Dendritic cell treated with granulocyte-macrophage colony-stimulating factor and Interleukin-4, amounts not matched to agents 40 ng/mL and 50 ng/mL, for 4 days (primary cell): ENCODE measurements at regions of chr13 and their contacts with region 1.

Region 1: DNA sequence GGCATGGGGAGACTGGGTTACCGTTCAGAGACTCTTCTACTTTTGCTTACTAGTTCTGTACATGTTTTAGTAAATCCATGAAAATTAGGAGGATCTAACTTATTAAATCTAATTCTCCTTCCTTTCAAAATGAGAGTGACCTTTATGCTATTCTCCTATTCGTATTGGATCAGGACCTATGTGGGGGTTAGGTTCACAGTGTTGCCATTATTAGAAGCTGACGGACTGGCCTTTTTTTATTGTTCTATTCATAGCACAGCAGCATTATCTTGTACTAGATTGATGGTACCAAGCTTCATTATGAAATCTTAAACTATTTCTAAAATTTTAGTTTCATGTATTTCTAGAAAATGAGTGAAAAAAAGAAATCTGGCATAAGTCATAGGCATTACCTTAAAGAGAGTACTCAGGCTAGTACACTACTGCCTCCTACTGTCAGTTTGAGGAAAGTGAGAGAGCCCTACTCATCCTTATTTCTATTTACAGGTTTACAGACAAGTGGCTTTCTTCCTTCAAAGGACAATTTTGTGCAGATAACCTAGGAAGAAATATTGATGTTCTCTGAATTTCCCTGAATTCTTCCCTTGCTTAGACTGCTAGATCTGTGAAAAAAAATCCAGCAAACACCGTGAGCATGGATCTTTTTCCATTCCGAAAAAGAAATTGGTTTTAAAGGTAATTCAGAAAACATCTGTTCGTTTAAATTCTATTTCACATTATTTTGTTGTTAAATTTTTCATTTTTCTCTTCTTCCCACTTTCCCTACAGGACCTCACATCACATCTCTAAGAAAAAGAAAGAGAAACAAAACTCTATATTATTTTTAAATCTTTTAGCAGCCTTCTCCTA is 485.5 kb downstream of the DIAPH3 start:
- H3K4me3 Mint-ChIP-seq: no peak overlapping the region
- H3K27ac Mint-ChIP-seq: no peak overlapping the region
- H3K4me1 Mint-ChIP-seq: peaks cover 10% of the 10 kb centered on the region
- H3K27me3 Mint-ChIP-seq: peaks cover 3% of the 10 kb centered on the region

Region 2: DNA sequence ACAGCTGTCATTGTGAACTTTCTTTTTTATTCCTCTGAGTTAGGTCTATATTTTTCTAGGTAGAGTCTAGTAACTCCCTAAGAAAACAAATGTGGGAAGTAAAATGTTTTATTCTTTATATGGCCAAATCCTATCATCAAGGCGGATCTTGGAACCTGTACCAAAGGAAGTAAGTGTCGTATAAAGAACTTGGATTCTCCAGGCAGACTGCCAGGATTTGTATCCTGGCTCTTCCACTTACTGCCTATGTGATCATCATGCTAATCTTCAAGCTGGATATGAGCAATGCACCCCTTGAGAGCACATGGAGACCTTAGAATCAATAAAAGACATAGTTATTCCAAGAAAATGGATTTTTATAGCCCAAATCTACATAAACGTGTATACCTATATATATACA is 1760.1 kb before region 1 on chr13:
- intact Hi-C with region 1: no loop called
- H3K4me3 Mint-ChIP-seq: no peak overlapping the region
- H3K27ac Mint-ChIP-seq: no peak overlapping the region
- H3K4me1 Mint-ChIP-seq: no peaks in the 10 kb centered on the region
- H3K27me3 Mint-ChIP-seq: no peaks in the 10 kb centered on the region

Region 3: DNA sequence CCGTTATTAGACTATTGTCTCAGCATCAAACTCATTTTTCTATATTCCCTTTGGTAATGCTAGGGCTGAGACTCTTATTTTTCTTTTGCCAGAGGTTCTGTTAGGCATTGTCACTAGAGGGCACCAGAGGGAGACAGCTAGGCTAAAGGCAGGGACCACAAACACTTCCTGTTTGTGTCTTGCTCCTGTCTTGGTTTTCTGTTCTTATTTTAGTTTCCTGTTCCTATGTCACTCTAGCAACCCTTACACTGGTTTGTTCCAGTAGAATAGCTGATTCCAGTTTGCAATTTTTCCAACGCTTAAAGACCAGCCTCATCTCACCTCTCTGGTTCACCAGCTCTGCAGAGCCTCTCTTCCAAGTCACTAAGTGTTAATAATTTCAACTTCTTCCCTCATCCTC is 286.5 kb before region 1 on chr13:
- intact Hi-C with region 1: loop called (anchors 1 kb)
- H3K4me3 Mint-ChIP-seq: no peak overlapping the region
- H3K27ac Mint-ChIP-seq: no peak overlapping the region
- H3K4me1 Mint-ChIP-seq: no peaks in the 10 kb centered on the region
- H3K27me3 Mint-ChIP-seq: peaks cover 2% of the 10 kb centered on the region

Region 4: DNA sequence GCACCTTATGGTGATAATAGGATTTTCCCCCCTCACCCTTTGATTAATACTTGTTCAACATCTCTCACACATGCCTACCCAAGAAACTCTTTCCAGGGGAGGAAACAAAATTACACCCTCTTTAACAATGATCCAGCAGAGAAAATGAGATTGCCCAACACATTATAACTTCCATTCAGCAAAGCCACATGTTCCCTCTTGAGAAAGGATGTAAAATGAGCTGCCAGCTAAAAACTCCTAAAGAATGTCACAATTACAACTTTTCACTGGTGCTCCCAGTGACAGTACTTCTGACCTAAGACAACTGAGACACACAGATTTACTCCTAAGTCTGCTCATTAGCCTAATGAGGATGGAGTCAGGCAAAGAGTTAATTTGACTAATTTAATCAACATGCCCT is 135.9 kb before region 1 on chr13:
- intact Hi-C with region 1: loop called (anchors 10 kb)
- H3K4me3 Mint-ChIP-seq: no peak overlapping the region
- H3K27ac Mint-ChIP-seq: no peak overlapping the region
- H3K4me1 Mint-ChIP-seq: no peaks in the 10 kb centered on the region
- H3K27me3 Mint-ChIP-seq: no peaks in the 10 kb centered on the region

Region 5: DNA sequence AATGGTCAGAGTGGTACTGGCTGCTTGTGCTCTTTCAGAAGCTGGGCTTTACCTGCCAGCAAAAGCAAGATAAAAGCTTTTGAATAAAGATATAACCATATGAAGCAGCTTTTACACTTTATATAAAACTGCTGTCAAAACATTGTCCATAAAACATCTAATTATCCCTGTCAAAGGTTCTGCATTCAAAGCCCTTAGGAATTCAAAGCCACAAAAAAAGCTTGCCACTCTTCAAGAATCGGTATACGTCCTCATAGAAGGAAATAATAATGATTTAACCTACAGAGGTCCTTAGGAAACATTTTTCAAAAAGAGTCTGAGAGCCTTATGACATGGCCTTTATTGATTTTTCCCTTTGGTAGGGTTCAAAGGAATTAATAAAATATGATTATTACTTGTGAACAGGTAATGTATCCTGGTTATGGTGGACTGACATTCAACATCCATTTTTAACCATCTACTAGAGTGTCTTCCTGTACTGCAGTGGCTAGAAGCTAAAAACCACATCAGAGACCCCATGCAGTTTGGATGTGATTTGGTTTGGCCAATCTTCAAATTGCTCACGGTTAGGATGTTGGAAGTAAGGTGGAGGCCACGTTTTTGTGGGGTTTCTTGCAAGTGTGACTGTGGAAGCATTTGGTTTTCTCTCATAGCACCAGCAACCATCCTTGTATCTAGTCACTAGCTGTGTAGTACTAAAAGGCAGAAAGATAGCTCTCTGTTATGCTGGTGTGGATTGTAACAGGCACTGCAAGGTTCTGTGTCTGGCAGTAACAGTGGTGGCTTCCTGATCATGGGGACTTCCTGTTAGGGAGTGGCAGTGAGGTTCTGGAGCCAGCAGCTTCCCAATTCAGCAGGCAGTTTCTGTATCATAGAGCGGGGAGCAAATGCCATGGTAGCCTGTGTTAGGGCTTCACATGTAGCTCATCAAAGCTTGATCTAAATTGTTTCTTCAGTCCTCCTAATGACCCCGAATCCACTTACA is 44.0 kb after region 1 on chr13:
- intact Hi-C with region 1: no loop called
- H3K4me3 Mint-ChIP-seq: no peak overlapping the region
- H3K27ac Mint-ChIP-seq: no peak overlapping the region
- H3K4me1 Mint-ChIP-seq: no peaks in the 10 kb centered on the region
- H3K27me3 Mint-ChIP-seq: no peaks in the 10 kb centered on the region

Region 6: DNA sequence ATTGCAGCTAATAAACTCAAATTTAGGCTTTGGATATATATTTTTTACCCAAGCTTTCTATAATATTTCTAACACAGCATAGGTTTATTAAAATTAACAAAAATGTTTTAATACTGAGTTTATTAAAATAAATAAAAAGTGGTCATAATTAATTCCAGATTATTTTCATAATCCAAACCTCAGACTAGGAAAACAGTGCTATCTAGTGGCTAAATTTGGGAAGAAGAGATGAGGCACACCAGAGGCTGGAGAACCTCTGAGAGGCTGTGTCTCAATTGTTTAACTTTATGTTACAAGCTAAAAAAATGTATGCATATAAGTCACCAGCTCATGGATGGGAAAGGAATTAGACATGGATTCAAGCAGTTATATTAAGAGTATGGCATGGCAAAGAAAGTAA is 93.1 kb after region 1 on chr13:
- intact Hi-C with region 1: loop called (anchors 2 kb)
- H3K4me3 Mint-ChIP-seq: no peak overlapping the region
- H3K27ac Mint-ChIP-seq: no peak overlapping the region
- H3K4me1 Mint-ChIP-seq: no peaks in the 10 kb centered on the region
- H3K27me3 Mint-ChIP-seq: no peaks in the 10 kb centered on the region

Region 7: DNA sequence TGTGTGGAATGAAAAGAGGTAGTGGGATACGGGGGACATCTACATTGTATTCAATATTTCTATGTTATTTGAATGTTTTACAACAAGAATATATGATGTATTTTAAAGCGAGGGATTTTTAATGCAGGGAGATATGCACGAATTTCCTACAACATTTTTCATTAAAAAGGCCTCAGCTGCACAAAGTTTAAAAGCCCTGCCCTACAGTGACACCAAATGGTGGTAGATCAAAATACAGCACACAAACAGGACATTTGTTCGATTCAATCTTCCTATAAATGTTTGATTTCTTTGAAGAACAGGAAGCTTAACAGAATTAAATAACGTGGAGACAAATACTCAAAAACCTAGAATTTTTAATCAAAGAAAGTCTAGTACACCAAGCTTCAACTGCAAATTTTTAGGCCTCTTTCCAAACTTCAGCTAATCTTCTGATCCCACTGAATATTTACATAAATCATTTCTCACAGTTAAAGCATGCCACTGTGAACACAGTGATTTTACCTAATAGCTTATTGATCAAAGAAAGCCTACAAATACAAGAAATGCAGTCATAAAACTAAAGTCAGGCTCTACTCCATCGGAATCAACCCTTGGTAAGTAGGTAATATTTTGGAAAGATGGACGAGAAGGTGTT is 228.3 kb after region 1 on chr13:
- intact Hi-C with region 1: loop called (anchors 10 kb)
- H3K4me3 Mint-ChIP-seq: no peak overlapping the region
- H3K27ac Mint-ChIP-seq: no peak overlapping the region
- H3K4me1 Mint-ChIP-seq: no peaks in the 10 kb centered on the region
- H3K27me3 Mint-ChIP-seq: no peaks in the 10 kb centered on the region

Region 8: GRCh38 chr13:60335531-60335930 is 657.3 kb after region 1 on chr13:
- intact Hi-C with region 1: loop called (anchors 2 kb)
- H3K4me3 Mint-ChIP-seq: no peak overlapping the region
- H3K27ac Mint-ChIP-seq: no peak overlapping the region
- H3K4me1 Mint-ChIP-seq: no peaks in the 10 kb centered on the region
- H3K27me3 Mint-ChIP-seq: peaks cover 6% of the 10 kb centered on the region

Region 9: GRCh38 chr13:60431108-60431700 is 753.0 kb after region 1 on chr13:
- intact Hi-C with region 1: loop called (anchors 1 kb)
- H3K4me3 Mint-ChIP-seq: no peak overlapping the region
- H3K27ac Mint-ChIP-seq: no peak overlapping the region
- H3K4me1 Mint-ChIP-seq: no peaks in the 10 kb centered on the region
- H3K27me3 Mint-ChIP-seq: no peaks in the 10 kb centered on the region